Aorta (tissue), 5 donors: ENCODE measurements at regions of chr20 and their contacts with region 1.

Region 1: GRCh38 chr20:53939572-53940359 is 130.6 kb downstream of the BCAS1 start:
- DNase-seq: peak; percentile 92 to 96
- ATAC-seq: peak; percentile 88
- H3K4me3 ChIP-seq: no peak overlapping the region
- H3K27ac ChIP-seq: peak overlapping the region in 1 of 2 donors; percentile 45
- H3K4me1 ChIP-seq: peaks cover 0 to 4% of the 10 kb centered on the region in 2 donors
- H3K27me3 ChIP-seq: no peaks in the 10 kb centered on the region

Region 2: GRCh38 chr20:54062812-54063280 is 123.1 kb after region 1 on chr20:
- intact Hi-C with region 1: loop called (anchors 10 kb)
- DNase-seq: no peak
- ATAC-seq: peak; percentile 74
- H3K4me3 ChIP-seq: no peak overlapping the region
- H3K27ac ChIP-seq: no peak overlapping the region
- H3K4me1 ChIP-seq: no peaks in the 10 kb centered on the region
- H3K27me3 ChIP-seq: no peaks in the 10 kb centered on the region